Activated CD4-positive, alpha-beta T cell treated with anti-CD3 and anti-CD28 coated beads for 36 hours (primary cell): ENCODE measurements at regions of chr1 and their contacts with region 1.

Region 1: GRCh38 chr1:151945725-151946364 is 36.5 kb upstream of the THEM4 start:
- DNase-seq: peak; percentile 82
- ATAC-seq: peak; percentile 45
- H3K4me3 Mint-ChIP-seq: peak overlapping the region; percentile 42
- H3K27ac Mint-ChIP-seq: peak overlapping the region; percentile 88
- H3K4me1 Mint-ChIP-seq: peaks cover 42% of the 10 kb centered on the region
- H3K27me3 Mint-ChIP-seq: no peaks in the 10 kb centered on the region

Region 2: DNA sequence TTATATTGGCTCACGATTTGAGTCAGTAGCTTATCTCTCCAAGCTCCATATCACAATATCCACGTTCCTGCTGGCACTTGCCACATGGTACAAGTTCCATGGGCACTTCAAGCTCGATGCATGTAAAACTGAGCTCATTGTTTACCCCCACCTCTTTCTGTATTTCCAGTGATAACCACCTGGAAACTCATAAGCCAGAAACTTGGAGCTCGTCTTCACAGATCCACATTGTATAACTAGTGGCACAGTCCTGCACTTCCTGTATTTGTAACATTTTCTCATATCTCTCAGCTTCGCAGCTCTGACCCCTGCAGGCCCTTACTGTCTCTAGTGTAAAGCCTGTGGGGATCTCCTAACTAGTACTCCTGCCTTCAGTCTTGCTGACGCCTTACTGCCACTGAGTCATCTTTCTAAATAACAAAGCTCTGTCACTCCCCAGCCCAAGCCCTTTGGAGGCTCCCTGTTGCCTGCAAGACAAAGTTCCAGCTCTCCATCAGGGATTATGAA is 99.7 kb before region 1 on chr1:
- CTCF ChIA-PET with region 1: no interaction called
- POLR2A ChIA-PET with region 1: no interaction called
- intact Hi-C with region 1: loop called in 1 of 2 experiments (anchors 5 kb)
- DNase-seq: peak; percentile 65
- ATAC-seq: peak; percentile 80
- H3K4me3 Mint-ChIP-seq: peak overlapping the region; percentile 0
- H3K27ac Mint-ChIP-seq: peak overlapping the region; percentile 78
- H3K4me1 Mint-ChIP-seq: peaks cover 34% of the 10 kb centered on the region
- H3K27me3 Mint-ChIP-seq: no peaks in the 10 kb centered on the region

Region 3: GRCh38 chr1:151909150-151910149 is 36.4 kb before region 1 on chr1 and contains the start of gene THEM4:
- CTCF ChIA-PET with region 1: interaction called, 4 read pairs
- POLR2A ChIA-PET with region 1: interaction called, 3 read pairs
- intact Hi-C with region 1: loop called in 1 of 2 experiments (anchors 1 kb)
- DNase-seq: peak; percentile 98
- ATAC-seq: peak; percentile 93
- H3K4me3 Mint-ChIP-seq: peak within 1 kb of the TSS; percentile 82
- H3K27ac Mint-ChIP-seq: peak within 1 kb of the TSS; percentile 91
- H3K4me1 Mint-ChIP-seq: peaks cover 42% of the 10 kb centered on the region
- H3K27me3 Mint-ChIP-seq: no peaks in the 10 kb centered on the region
- total RNA-seq, gene THEM4: 23.9 to 26.0 TPM

Region 4: GRCh38 chr1:151968058-151968457 is 22.2 kb after region 1 on chr1:
- CTCF ChIA-PET with region 1: interaction called, 17 read pairs
- POLR2A ChIA-PET with region 1: no interaction called
- intact Hi-C with region 1: no loop called
- DNase-seq: peak; percentile 63
- ATAC-seq: peak; percentile 78
- H3K4me3 Mint-ChIP-seq: no peak overlapping the region
- H3K27ac Mint-ChIP-seq: no peak overlapping the region
- H3K4me1 Mint-ChIP-seq: peaks cover 18% of the 10 kb centered on the region
- H3K27me3 Mint-ChIP-seq: no peaks in the 10 kb centered on the region

Region 5: DNA sequence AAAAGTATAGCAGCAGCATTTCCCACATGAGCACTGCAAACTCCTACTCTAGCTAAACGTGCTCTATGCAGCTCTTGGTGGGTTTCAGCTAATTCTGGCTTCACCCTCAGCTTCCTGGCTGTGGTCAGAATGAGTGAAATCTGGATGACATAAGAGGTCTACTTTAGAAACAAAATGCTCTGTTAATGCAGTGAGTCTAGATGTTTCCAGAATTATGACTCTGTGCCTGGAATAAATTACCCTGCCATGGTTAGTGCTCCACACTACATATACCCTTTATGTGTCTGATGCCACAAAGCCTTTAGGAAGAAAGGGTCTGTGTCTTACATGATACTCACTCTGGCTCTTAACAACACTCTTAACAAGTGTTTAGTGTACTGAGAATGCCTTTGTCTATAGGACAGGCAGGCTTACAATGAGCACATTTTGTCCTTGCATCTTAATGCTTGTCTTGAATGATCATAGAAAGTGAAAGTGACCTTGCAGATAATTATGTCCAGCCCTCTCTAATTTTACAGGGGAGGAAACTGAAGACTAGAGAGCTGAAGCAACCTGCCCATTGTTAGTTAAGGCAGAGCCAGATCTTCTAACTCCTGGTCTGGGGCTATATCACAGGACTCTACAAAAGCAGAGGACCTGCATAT is 38.6 kb after region 1 on chr1:
- CTCF ChIA-PET with region 1: interaction called, 4 read pairs
- POLR2A ChIA-PET with region 1: interaction called, 4 read pairs
- intact Hi-C with region 1: loop called (anchors 1 to 2 kb)
- DNase-seq: peak; percentile 67
- ATAC-seq: peak; percentile 92
- H3K4me3 Mint-ChIP-seq: peak overlapping the region; percentile 28
- H3K27ac Mint-ChIP-seq: peak overlapping the region; percentile 78
- H3K4me1 Mint-ChIP-seq: peaks cover 60% of the 10 kb centered on the region
- H3K27me3 Mint-ChIP-seq: no peaks in the 10 kb centered on the region

Region 6: GRCh38 chr1:151993654-151994496 is 48.0 kb after region 1 on chr1 and contains the start of gene S100A10:
- CTCF ChIA-PET with region 1: interaction called, 266 read pairs
- POLR2A ChIA-PET with region 1: interaction called, 3 read pairs
- intact Hi-C with region 1: loop called in 1 of 2 experiments (anchors 1 kb)
- DNase-seq: peak; percentile 85
- ATAC-seq: peak; percentile 79
- H3K4me3 Mint-ChIP-seq: peak within 1 kb of the TSS; percentile 90
- H3K27ac Mint-ChIP-seq: peak within 1 kb of the TSS; percentile 94
- H3K4me1 Mint-ChIP-seq: peaks cover 48% of the 10 kb centered on the region
- H3K27me3 Mint-ChIP-seq: no peaks in the 10 kb centered on the region
- total RNA-seq, gene S100A10: 230 to 246 TPM